Dorsolateral prefrontal cortex (tissue), 120 donors: ENCODE measurements at regions of chr6 and their contacts with region 1.

Region 1: GRCh38 chr6:124961777-124962611 is at the start of gene RNF217:
- DNase-seq: peak; percentile 28 to 71 (median 56)
- H3K4me3 ChIP-seq: peak within 1 kb of the TSS; percentile 70 to 93 (median 84)
- H3K27ac ChIP-seq: peak within 1 kb of the TSS; percentile 69 to 96 (median 89)
- H3K27me3 ChIP-seq: no peaks in the 10 kb centered on the region
- CTCF ChIP-seq: peak in 5 of 56 donors; percentile 11 to 23 (median 17)
- total RNA-seq, gene RNF217: 13.2 to 35.6 (median 22.1) TPM

Region 2: GRCh38 chr6:124917769-124918168 is 44.2 kb before region 1 on chr6:
- intact Hi-C with region 1: no loop called
- DNase-seq: no peak
- H3K4me3 ChIP-seq: no peak overlapping the region
- H3K27ac ChIP-seq: no peak overlapping the region
- H3K27me3 ChIP-seq: no peaks in the 10 kb centered on the region
- CTCF ChIP-seq: no peak

Region 3: GRCh38 chr6:125013938-125014660 is 52.1 kb after region 1 on chr6:
- intact Hi-C with region 1: loop called in 1 of 2 experiments (anchors 10 kb)
- DNase-seq: no peak
- H3K4me3 ChIP-seq: no peak overlapping the region
- H3K27ac ChIP-seq: no peak overlapping the region
- H3K27me3 ChIP-seq: no peaks in the 10 kb centered on the region
- CTCF ChIP-seq: no peak

Region 4: GRCh38 chr6:125041740-125042459 is 79.9 kb after region 1 on chr6:
- intact Hi-C with region 1: loop called in 1 of 2 experiments (anchors 5 kb)
- DNase-seq: no peak
- H3K4me3 ChIP-seq: no peak overlapping the region
- H3K27ac ChIP-seq: peak overlapping the region in 6 of 59 donors; percentile 4 to 84 (median 63)
- H3K27me3 ChIP-seq: no peaks in the 10 kb centered on the region
- CTCF ChIP-seq: no peak

Region 5: DNA sequence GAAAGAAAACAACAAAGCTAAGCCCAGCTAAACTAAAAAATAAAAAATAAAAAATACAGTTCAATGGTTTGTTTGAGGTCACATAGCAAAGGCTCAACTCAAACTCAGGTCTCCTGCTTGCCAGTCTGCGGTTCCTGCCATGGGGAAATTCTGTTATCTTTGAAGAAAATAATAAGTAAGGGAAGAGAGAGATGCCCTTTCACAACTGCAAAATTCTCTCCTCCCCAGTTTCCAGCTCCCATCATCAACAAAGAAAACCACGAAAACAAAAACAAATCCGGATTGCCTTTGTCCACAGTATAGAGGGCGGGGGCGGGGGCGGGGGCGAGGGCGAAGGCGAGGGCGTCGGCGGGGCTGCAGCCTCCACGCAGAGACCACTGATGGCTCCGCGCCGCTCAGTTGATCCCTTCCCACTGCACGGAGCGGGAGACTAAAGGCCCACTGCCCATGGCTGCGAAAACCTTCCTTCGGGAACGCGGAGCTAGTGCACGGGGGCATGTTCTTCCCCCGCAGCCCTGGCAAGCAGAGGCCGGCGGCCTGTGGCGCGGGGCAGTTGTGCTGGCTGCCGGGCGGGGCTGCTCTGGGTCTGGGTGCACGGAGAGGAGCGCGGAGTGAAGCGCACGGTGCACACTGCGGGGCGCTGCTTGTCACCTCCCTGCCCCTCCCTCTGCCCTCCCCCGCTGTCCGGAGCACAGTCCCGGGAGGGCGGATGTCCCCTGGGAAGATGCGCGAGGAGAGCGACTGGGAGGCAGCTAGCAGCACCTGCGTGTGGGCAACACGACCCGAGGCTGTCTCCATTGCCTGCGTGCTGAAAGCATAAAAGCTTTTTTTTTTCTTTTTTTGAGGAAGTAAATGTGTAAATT is 137.4 kb after region 1 on chr6:
- intact Hi-C with region 1: loop called (anchors 2 kb)
- DNase-seq: peak; percentile 10 to 87 (median 74)
- H3K4me3 ChIP-seq: peak overlapping the region; percentile 46 to 83 (median 66)
- H3K27ac ChIP-seq: peak overlapping the region; percentile 27 to 96 (median 87)
- H3K27me3 ChIP-seq: no peaks in the 10 kb centered on the region
- CTCF ChIP-seq: peak in 22 of 56 donors; percentile 9 to 54 (median 27)